ENCODE measurements at regions of chr16 and their contacts with region 1.

Region 1: DNA sequence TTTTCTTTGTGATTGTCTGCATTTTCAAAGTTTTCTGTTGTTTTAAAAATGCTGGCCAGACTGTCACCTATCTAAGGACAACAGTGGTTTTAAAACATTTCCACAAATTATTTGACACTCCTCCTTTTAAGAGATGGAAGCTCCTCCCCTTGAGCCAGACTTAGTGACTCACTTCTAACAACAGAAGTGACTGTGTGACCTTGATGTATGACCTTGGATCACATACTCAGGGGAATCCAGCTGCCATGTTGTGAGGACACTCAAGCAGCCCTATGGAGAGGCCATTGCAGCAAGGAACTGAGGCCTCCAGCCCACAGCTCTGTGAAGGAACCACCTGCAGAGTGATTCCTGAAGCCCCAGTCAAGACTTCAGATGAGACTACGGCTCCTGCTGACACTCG is 97.7 kb upstream of the FOXF1 start:
- DNase-seq: no peak
- H3K4me3 ChIP-seq: no peak overlapping the region
- H3K27ac ChIP-seq: no peak overlapping the region
- H3K4me1 ChIP-seq: no peaks in the 10 kb centered on the region
- H3K27me3 ChIP-seq: peaks cover 46% of the 10 kb centered on the region
- CTCF ChIP-seq: no peak

Region 2: GRCh38 chr16:86396897-86397296 is 15.7 kb before region 1 on chr16:
- CTCF ChIA-PET with region 1: no interaction called
- POLR2A ChIA-PET with region 1: no interaction called
- intact Hi-C with region 1: no loop called
- DNase-seq: peak; percentile 77
- H3K4me3 ChIP-seq: no peak overlapping the region
- H3K27ac ChIP-seq: peak overlapping the region; percentile 41
- H3K4me1 ChIP-seq: peaks cover 10% of the 10 kb centered on the region
- H3K27me3 ChIP-seq: peaks cover 20% of the 10 kb centered on the region
- CTCF ChIP-seq: no peak

Region 3: GRCh38 chr16:86432691-86433090 is 20.1 kb after region 1 on chr16:
- CTCF ChIA-PET with region 1: no interaction called
- POLR2A ChIA-PET with region 1: interaction called, 19 read pairs
- intact Hi-C with region 1: no loop called
- DNase-seq: no peak
- H3K4me3 ChIP-seq: no peak overlapping the region
- H3K27ac ChIP-seq: no peak overlapping the region
- H3K4me1 ChIP-seq: no peaks in the 10 kb centered on the region
- H3K27me3 ChIP-seq: peaks cover 78% of the 10 kb centered on the region
- CTCF ChIP-seq: no peak